H1 (cell line): ENCODE measurements at regions of chr4 and their contacts with region 1.

Region 1: GRCh38 chr4:22515145-22515887 is 550 bp downstream of the ADGRA3 start:
- DNase-seq: peak in 1 of 2 experiments; percentile 76
- H3K4me3 ChIP-seq: peak overlapping the region; percentile 80 to 99 (median 84)
- H3K27ac ChIP-seq: peak overlapping the region; percentile 80
- H3K4me1 ChIP-seq: peaks cover 3 to 13% (median 5%) of the 10 kb centered on the region in 4 experiments; a peak in 5 of 7 replicates
- H3K27me3 ChIP-seq: peaks cover 0 to 3% (median 0%) of the 10 kb centered on the region in 4 experiments; a peak in 3 of 7 replicates
- CTCF ChIP-seq: peak in 2 of 3 experiments; percentile 3 to 9; a peak in 2 of 4 replicates
- EP300 ChIP-seq: no peak
- POLR2A ChIP-seq: peak; percentile 56 to 87
- RAD21 ChIP-seq: no peak

Region 2: DNA sequence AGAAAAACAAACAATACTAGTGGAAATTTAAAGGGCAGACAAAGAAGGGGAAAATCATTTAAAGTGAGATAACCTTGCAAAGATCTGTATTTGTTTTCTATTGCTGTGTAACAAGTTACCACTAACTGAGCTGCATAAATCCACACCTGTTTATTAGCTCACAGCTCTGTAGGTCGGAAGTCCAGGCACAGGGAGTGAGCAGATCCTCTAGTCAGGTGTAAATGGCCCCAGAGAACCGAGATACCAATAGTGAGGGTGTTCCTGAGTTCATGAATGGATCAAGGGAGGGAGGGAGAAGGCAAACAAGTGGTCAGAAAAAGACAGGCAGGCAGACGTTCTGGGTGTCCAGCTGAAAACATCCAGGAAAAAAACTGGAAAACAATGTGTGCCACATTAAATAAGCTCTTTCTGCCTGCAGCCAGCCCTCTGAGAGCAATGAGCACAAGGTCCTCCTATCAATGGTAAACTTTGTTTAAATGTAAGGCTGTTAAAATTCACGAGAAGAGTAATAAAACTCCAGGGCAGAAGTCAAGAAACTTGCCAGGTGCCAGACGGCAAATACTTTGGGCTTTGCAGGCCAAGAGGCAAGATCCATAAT is 24.5 kb before region 1 on chr4:
- CTCF ChIA-PET with region 1: no interaction called
- POLR2A ChIA-PET with region 1: interaction called, 10 read pairs
- DNase-seq: no peak
- H3K4me3 ChIP-seq: no peak overlapping the region
- H3K27ac ChIP-seq: 0 out of 2 replicates have a peak overlapping the region, but pooled peaks have one; percentile 20
- H3K4me1 ChIP-seq: peaks cover 0 to 13% (median 8%) of the 10 kb centered on the region in 4 experiments; a peak in 4 of 7 replicates
- H3K27me3 ChIP-seq: no peaks in the 10 kb centered on the region
- CTCF ChIP-seq: no peak
- EP300 ChIP-seq: no peak
- POLR2A ChIP-seq: no peak
- RAD21 ChIP-seq: no peak

Region 3: DNA sequence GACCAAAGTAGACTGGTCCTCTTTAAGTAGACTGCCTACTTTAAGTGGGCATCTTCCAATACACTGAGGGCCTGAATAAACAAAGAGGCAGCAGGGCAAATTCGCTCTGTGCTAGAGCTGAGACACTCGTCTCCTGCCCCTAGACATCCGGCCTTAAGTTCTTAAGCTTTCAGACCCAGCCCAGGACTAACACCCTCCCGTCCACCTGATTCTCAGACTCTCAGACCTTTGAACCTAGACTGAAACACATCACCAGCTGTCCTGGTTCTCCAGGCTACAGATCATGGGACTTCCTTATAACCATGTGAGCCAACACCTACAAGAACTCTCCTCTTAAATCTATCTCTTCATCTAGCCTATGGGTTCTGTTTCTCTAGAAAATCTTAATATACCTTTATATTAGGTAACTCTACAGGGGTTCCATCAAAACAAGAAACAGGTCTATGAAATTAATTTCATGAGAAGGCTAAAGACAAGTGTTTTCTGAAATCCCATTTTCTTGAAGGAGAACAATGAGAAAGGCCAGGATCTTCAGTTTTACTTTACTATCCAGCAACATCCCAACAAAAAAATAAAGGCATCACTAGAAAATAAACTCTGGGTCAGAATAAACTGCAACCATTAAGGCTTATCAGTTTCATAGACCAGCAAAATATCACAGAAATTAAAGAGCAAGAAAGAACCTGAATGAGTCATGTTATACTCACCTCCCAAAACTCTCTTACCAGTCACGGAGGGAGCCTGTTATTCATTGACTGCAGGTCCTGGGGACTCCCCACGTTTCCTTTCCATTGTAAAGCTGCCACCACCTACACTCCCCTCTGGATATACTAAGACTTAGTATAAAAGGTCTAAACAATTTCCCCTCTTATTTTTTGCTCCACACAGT is 14.2 kb before region 1 on chr4:
- CTCF ChIA-PET with region 1: interaction called, 4 read pairs
- POLR2A ChIA-PET with region 1: interaction called, 62 read pairs
- DNase-seq: no peak
- H3K4me3 ChIP-seq: no peak overlapping the region
- H3K27ac ChIP-seq: no peak overlapping the region
- H3K4me1 ChIP-seq: peaks cover 0 to 31% (median 16%) of the 10 kb centered on the region in 4 experiments; a peak in 4 of 7 replicates
- H3K27me3 ChIP-seq: no peaks in the 10 kb centered on the region
- CTCF ChIP-seq: no peak
- EP300 ChIP-seq: no peak
- POLR2A ChIP-seq: no peak
- RAD21 ChIP-seq: no peak